ENCODE measurements at regions of chr4 and their contacts with region 1.

Region 1: GRCh38 chr4:181528570-181529184 is 714.5 kb upstream of the TENM3 start:
- DNase-seq: peak; percentile 89
- H3K4me3 Mint-ChIP-seq: no peak overlapping the region
- H3K27ac Mint-ChIP-seq: no peak overlapping the region
- H3K4me1 Mint-ChIP-seq: no peaks in the 10 kb centered on the region
- H3K27me3 Mint-ChIP-seq: no peaks in the 10 kb centered on the region
- CTCF ChIP-seq: peak; percentile 92

Region 2: DNA sequence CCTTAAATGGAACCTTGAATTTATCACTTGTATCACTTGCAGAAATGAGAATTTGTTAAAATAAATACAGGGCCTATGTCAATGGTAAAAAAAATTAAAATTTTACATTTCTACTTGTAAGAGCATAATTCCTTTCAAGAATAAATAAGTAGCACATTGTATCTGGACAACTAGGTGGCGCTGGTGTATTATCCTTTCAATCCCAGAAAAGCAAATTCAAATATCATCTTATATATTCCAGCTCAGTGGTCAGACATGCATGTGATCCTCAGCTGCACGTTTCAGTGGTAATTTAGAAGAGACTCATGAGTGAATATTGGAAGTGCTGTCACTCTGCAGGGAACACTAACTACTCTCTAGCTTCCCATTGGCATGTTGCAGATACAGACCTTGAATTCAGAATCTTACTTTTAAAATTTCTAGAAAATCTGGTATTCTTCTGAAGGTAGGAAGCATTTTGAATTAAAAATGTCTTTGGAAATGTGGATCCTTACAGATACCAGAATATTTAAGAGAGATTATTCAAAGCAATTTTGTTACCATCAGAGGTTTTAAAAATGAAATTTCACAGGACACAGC is 700.1 kb before region 1 on chr4:
- CTCF ChIA-PET with region 1: interaction called, 30 read pairs
- POLR2A ChIA-PET with region 1: no interaction called
- intact Hi-C with region 1: loop called (anchors 1 kb)
- DNase-seq: peak; percentile 71
- H3K4me3 Mint-ChIP-seq: no peak overlapping the region
- H3K27ac Mint-ChIP-seq: no peak overlapping the region
- H3K4me1 Mint-ChIP-seq: peaks cover 11% of the 10 kb centered on the region
- H3K27me3 Mint-ChIP-seq: no peaks in the 10 kb centered on the region
- CTCF ChIP-seq: peak; percentile 63

Region 3: DNA sequence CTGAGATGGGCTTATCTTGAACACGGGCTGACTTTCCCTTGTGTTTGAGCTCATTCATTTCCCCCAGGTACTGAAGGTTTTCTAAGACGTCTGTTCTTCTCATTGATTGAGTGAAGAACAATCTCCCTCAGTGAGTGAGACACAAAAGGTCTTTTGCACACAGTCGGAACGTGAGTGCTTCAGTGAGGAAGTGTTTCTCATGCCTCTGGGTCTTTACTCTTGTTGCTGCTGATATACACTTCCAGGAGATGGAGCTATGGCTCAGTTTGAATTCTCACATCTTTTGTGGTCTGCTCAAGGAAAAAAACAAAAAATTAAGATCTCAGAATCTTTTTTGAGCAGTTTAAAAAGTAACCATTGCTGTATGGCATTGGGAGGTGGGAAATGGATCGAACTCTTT is 267.4 kb before region 1 on chr4:
- CTCF ChIA-PET with region 1: interaction called, 21 read pairs
- POLR2A ChIA-PET with region 1: no interaction called
- intact Hi-C with region 1: loop called (anchors 1 kb)
- DNase-seq: peak; percentile 38
- H3K4me3 Mint-ChIP-seq: no peak overlapping the region
- H3K27ac Mint-ChIP-seq: no peak overlapping the region
- H3K4me1 Mint-ChIP-seq: no peaks in the 10 kb centered on the region
- H3K27me3 Mint-ChIP-seq: no peaks in the 10 kb centered on the region
- CTCF ChIP-seq: peak; percentile 26

Region 4: GRCh38 chr4:181301735-181302710 is 226.7 kb before region 1 on chr4:
- CTCF ChIA-PET with region 1: interaction called, 20 read pairs
- POLR2A ChIA-PET with region 1: no interaction called
- intact Hi-C with region 1: loop called (anchors 1 kb)
- DNase-seq: peak; percentile 81
- H3K4me3 Mint-ChIP-seq: no peak overlapping the region
- H3K27ac Mint-ChIP-seq: no peak overlapping the region
- H3K4me1 Mint-ChIP-seq: peaks cover 5% of the 10 kb centered on the region
- H3K27me3 Mint-ChIP-seq: no peaks in the 10 kb centered on the region
- CTCF ChIP-seq: peak; percentile 69

Region 5: GRCh38 chr4:181475781-181476507 is 52.7 kb before region 1 on chr4:
- CTCF ChIA-PET with region 1: no interaction called
- POLR2A ChIA-PET with region 1: no interaction called
- intact Hi-C with region 1: no loop called
- DNase-seq: no peak
- H3K4me3 Mint-ChIP-seq: no peak overlapping the region
- H3K27ac Mint-ChIP-seq: no peak overlapping the region
- H3K4me1 Mint-ChIP-seq: peaks cover 6% of the 10 kb centered on the region
- H3K27me3 Mint-ChIP-seq: no peaks in the 10 kb centered on the region
- CTCF ChIP-seq: no peak

Region 6: DNA sequence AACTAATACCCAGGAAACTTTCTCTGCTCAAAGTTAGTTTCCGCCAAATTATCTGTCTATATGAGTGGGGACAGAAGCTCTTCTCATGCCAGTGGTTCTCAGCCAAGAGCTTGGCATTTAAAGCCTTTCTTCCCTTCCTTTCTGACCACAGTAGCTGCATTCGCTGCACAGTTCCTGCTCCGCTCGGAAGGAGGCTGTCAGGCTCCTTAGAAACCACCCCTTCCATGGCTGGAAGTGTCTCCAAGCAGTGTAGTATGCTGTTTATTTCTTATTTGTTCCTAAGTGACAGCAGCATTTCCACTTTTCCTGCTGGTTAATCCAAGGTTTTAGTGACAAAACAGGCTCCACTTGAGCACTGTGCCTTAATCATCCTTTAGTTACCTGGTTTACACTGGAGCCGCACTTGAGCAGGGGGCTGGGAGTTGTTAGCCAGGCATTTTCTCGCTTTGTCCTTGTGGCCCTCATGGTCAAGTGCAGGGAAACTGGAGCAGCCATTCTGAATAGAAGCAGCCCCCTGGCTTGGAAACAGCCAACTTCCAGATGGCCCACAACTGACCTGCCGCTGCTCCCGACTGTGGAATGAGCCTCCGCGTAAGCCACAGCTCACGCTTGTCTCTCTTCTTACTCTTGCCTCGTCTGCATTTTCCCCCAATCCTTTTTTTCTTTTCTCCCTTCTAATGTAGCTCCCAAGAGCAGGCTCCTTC is 24.8 kb before region 1 on chr4:
- CTCF ChIA-PET with region 1: interaction called, 13 read pairs
- POLR2A ChIA-PET with region 1: no interaction called
- intact Hi-C with region 1: no loop called
- DNase-seq: no peak
- H3K4me3 Mint-ChIP-seq: no peak overlapping the region
- H3K27ac Mint-ChIP-seq: no peak overlapping the region
- H3K4me1 Mint-ChIP-seq: no peaks in the 10 kb centered on the region
- H3K27me3 Mint-ChIP-seq: no peaks in the 10 kb centered on the region
- CTCF ChIP-seq: no peak

Region 7: GRCh38 chr4:181517491-181517890 is 11.2 kb before region 1 on chr4:
- CTCF ChIA-PET with region 1: interaction called, 29 read pairs
- POLR2A ChIA-PET with region 1: no interaction called
- intact Hi-C with region 1: no loop called
- DNase-seq: no peak
- H3K4me3 Mint-ChIP-seq: no peak overlapping the region
- H3K27ac Mint-ChIP-seq: no peak overlapping the region
- H3K4me1 Mint-ChIP-seq: no peaks in the 10 kb centered on the region
- H3K27me3 Mint-ChIP-seq: no peaks in the 10 kb centered on the region
- CTCF ChIP-seq: no peak